GM12878 (cell line): ENCODE measurements at regions of chr17 and their contacts with region 1.

Region 1: DNA sequence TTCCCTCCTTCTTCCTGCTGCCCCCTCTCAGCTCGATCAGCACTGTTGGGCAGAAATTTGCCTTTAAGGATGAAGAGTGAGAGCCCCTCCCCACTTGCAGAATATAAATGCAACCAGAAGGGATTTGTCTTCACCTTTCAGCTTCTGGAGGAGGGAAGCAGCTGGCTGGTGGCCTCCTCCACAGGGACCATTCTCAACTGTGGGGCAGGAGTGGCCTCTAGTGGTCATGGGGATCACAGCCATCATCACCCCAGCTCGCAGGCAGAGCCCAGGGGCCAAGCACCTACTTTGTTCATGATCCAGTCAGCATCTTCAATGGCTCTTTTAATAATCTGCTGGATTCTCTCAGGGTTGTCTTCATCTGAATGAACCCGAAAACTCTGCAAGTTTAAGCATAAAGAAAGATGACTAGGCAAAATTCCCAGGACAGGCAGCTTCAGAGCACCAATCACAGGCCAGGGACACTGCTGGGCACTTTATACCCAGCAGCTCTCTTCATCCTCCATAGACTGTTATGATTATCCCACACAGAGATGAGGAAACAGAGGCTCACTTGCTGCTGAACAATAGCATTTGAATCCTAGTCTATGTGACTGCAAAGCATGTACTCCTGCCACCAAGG is 13.1 kb downstream of the LYRM9 start:
- DNase-seq: peak; percentile 23
- ATAC-seq: peak; percentile 99
- H3K4me3 ChIP-seq: no peak overlapping the region
- H3K27ac ChIP-seq: no peak overlapping the region
- H3K4me1 ChIP-seq: no peaks in the 10 kb centered on the region
- H3K27me3 ChIP-seq: no peaks in the 10 kb centered on the region
- CTCF ChIP-seq: peak; percentile 92 to 98 (median 95)
- EP300 ChIP-seq: no peak
- POLR2A ChIP-seq: no peak
- RAD21 ChIP-seq: peak; percentile 97

Region 2: DNA sequence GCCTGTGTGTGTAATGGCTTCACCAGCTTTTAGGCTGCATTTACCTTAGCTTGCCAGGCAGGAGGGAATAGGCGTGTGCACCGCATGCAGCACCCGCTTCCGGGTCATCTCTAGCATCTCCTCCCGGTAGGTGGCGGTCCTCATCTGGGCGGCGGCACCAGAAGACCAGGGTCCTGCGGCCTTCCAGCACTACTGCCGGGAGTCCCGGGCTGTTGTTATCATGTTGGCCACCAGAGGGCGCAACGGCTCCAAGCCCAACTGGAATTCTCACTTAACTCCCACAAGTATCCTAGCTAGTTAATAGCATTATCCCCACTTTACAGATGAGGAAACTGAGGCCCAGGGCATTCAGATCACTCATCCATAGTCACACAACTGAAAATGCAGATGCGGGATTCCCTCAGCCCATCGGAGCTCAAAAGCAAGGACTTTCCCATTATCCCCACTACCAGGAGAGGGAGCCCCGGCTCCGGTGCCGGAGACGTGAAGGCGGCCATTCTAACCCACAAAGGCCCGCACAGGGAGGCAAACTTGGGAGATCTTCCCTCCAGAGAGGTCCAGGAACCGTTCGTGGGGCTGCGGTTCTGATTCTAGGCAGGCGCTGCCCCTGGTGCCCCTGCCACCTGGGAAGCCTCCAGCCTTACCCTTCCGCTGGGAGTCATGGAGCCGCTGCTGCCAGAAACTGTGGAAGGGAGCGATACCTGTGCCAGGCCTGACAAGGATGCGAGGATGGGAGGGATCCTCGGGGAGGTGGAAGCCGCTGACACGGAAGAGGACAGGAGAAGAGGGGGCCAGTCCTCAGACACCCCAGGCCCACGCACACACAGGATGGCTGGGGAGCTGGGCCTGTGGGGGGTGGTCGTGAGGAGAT is 225.2 kb before region 1 on chr17:
- CTCF ChIA-PET with region 1: interaction called, 30 read pairs
- POLR2A ChIA-PET with region 1: no interaction called
- RAD21 ChIA-PET with region 1: interaction called, 4 read pairs
- SMC1A ChIA-PET with region 1: interaction called, 4 read pairs
- in situ Hi-C with region 1: loop called (anchors 5 kb)
- intact Hi-C with region 1: loop called (anchors 1 kb)
- DNase-seq: peak; percentile 25
- ATAC-seq: peak; percentile 98
- H3K4me3 ChIP-seq: no peak overlapping the region
- H3K27ac ChIP-seq: no peak overlapping the region
- H3K4me1 ChIP-seq: no peaks in the 10 kb centered on the region
- H3K27me3 ChIP-seq: no peaks in the 10 kb centered on the region
- CTCF ChIP-seq: peak; percentile 67 to 90 (median 81)
- EP300 ChIP-seq: no peak
- POLR2A ChIP-seq: no peak
- RAD21 ChIP-seq: peak; percentile 57

Region 3: GRCh38 chr17:27800522-27800921 is 79.6 kb before region 1 on chr17 and contains the start of gene NOS2:
- CTCF ChIA-PET with region 1: interaction called, 664 read pairs
- POLR2A ChIA-PET with region 1: interaction called, 40 read pairs
- RAD21 ChIA-PET with region 1: interaction called, 439 read pairs
- SMC1A ChIA-PET with region 1: interaction called, 457 read pairs
- in situ Hi-C with region 1: loop called (anchors 5 kb)
- intact Hi-C with region 1: loop called (anchors 1 kb)
- DNase-seq: no peak
- ATAC-seq: no peak
- H3K4me3 ChIP-seq: no peak within 1 kb of the TSS
- H3K27ac ChIP-seq: no peak within 1 kb of the TSS
- H3K4me1 ChIP-seq: no peaks in the 10 kb centered on the region; the same call in 1 of the 2 replicates
- H3K27me3 ChIP-seq: no peaks in the 10 kb centered on the region
- CTCF ChIP-seq: no peak
- EP300 ChIP-seq: no peak
- POLR2A ChIP-seq: no peak
- RAD21 ChIP-seq: no peak
- polyA plus RNA-seq, gene NOS2: not detected

Region 4: DNA sequence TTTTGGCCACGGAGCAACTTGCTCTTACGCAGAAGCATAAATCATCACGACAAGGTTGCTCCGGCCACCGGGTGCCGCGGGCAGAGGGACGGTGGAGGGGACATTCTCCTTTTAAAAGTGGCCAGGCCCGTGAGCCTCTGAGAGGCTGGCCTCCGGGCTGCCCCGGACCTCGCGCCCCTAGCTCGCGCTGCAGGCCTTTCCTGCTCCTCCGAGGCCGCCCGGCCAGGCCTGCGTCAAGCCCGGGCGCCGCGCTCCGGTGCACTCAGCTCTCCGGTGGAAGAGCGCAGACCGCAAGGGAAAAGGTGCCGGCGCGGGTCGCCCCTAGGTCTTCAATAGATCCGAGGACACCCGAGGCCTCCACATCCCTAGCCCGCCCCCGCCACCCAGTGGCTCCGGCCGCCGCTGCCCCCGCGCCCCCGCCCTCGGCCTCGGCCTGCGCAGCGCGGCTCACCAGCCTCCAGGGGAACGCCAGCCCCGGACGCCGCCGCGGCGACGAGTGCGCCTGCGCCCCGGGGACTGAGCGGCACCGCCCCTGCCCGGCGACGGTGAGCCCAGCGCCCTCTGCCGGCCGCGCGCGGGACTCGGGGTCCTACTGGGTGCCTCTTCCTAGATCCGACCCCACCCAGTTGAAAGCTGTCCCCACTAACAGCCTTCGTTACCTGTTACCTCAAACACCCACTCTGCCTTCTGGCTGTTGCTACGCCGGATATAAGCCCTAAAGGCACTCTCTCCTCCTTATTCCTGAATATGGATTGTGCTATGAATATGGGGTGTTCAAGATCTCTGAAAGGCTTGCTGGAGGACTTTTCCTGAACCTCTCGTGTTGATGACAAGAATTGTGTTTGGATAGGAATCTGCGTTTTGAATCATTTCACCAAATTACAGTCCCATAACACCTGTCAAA is 13.0 kb after region 1 on chr17 and contains the start of gene LYRM9:
- CTCF ChIA-PET with region 1: interaction called, 75 read pairs
- POLR2A ChIA-PET with region 1: interaction called, 4 read pairs
- RAD21 ChIA-PET with region 1: interaction called, 21 read pairs
- SMC1A ChIA-PET with region 1: interaction called, 25 read pairs
- in situ Hi-C with region 1: no loop called
- intact Hi-C with region 1: no loop called
- DNase-seq: peak; percentile 48
- ATAC-seq: peak; percentile 99
- H3K4me3 ChIP-seq: peak within 1 kb of the TSS; percentile 65
- H3K27ac ChIP-seq: peak within 1 kb of the TSS; percentile 61
- H3K4me1 ChIP-seq: peaks cover 8% of the 10 kb centered on the region
- H3K27me3 ChIP-seq: no peaks in the 10 kb centered on the region
- CTCF ChIP-seq: peak; percentile 77 to 91 (median 79)
- EP300 ChIP-seq: no peak
- POLR2A ChIP-seq: peak; percentile 72
- RAD21 ChIP-seq: peak; percentile 40
- polyA plus RNA-seq, gene LYRM9: 1.8 to 2.7 TPM

Region 5: DNA sequence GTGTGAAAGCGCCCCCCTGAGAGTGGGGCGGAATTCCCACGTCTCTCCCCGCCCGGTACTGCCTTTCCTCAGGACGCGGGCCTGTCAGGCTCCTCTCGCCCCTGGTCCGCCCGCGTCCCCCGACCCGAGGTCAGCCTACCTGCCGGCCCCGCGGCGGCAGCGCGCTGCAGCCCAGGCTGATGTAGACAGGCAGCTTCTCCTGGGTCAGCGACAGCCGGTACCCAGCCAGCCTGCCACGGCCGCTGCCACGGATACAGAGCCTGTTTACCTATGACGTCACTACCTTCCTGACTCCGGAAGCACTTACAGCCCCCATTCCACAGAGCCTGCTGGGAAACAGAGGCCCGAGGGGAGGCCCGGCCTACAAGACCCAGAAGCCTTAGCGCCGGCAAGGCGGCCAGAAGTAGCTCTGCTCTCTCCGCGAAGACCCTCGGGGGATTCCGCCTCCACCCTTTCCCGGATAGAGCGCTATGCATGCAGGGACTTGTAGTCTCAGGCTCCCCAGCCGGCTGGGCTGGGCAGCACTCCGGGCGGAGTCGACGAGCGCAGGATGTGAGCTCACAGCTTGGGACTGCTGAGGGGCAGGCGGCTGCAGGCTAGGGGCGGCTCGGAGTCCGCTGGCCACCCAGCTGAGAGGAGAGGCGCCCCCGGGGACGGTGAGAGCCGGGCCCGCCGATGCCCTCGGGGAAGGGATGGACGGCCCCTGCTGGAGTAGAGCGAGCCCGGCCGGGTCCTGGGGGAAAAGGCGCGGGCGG is 455.3 kb after region 1 on chr17 and contains the starts of genes IFT20 and TNFAIP1:
- CTCF ChIA-PET with region 1: no interaction called
- POLR2A ChIA-PET with region 1: no interaction called
- RAD21 ChIA-PET with region 1: no interaction called
- SMC1A ChIA-PET with region 1: no interaction called
- in situ Hi-C with region 1: no loop called
- intact Hi-C with region 1: no loop called
- DNase-seq: peak; percentile 98
- ATAC-seq: peak; percentile 98
- H3K4me3 ChIP-seq: peak within 1 kb of the TSS; percentile 88
- H3K27ac ChIP-seq: peak within 1 kb of the TSS; percentile 36
- H3K4me1 ChIP-seq: peaks cover 3% of the 10 kb centered on the region
- H3K27me3 ChIP-seq: no peaks in the 10 kb centered on the region
- CTCF ChIP-seq: no peak
- EP300 ChIP-seq: 0 out of 4 replicates have a peak, but pooled peaks of 1 of the 2 experiments have one; percentile 34
- POLR2A ChIP-seq: peak; percentile 93
- RAD21 ChIP-seq: no peak
- polyA plus RNA-seq, gene IFT20: 9.4 to 13.1 TPM
- polyA plus RNA-seq, gene TNFAIP1: 1.8 to 3.9 TPM